ENCODE measurements at regions of chrX and their contacts with region 1.

Region 1: GRCh38 chrX:23008431-23009099 is 8.8 kb downstream of the DDX53 start:
- DNase-seq: peak; percentile 62
- ATAC-seq: peak; percentile 88
- H3K4me3 ChIP-seq: no peak overlapping the region; the same call in 1 of the 2 replicates
- H3K27ac ChIP-seq: no peak overlapping the region
- H3K4me1 ChIP-seq: no peaks in the 10 kb centered on the region
- H3K27me3 ChIP-seq: no peaks in the 10 kb centered on the region
- CTCF ChIP-seq: peak; percentile 73

Region 2: DNA sequence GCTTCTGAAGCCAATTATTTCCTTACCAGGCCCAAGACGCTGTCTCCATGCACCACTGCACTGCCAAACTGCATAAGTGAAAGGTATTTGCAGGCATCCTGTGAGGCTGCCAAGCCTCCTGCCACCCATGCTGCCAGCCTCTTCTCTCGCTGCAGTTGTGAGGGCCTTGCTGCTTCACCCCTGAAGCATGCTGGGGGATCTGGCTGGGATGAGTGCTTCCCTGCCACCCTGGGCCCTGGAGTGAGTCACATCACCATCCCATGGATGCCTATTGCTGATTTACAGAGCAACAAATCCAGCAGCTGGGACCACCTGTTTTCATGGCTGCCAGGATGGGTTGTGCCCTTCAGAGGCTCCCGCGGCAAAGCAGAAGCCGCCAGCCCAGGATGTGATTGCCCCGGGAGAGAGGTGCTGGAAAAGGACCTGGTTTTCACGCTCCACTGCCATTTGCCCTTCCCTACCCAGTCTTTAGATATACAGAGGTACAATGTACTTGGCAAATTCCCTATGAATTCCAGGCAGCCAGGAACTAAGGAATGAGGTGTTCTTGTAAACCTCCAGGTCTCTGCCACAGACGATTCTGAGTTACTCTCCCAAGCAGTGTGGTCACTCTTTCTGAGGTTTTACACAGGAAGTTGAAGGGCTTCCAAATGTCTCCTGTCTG is 284.6 kb after region 1 on chrX:
- CTCF ChIA-PET with region 1: no interaction called
- POLR2A ChIA-PET with region 1: no interaction called
- intact Hi-C with region 1: loop called (anchors 1 kb)
- DNase-seq: peak; percentile 49
- ATAC-seq: peak; percentile 92
- H3K4me3 ChIP-seq: no peak overlapping the region
- H3K27ac ChIP-seq: no peak overlapping the region
- H3K4me1 ChIP-seq: peaks cover 5% of the 10 kb centered on the region; the same call in 1 of the 2 replicates
- H3K27me3 ChIP-seq: no peaks in the 10 kb centered on the region
- CTCF ChIP-seq: no peak

Region 3: DNA sequence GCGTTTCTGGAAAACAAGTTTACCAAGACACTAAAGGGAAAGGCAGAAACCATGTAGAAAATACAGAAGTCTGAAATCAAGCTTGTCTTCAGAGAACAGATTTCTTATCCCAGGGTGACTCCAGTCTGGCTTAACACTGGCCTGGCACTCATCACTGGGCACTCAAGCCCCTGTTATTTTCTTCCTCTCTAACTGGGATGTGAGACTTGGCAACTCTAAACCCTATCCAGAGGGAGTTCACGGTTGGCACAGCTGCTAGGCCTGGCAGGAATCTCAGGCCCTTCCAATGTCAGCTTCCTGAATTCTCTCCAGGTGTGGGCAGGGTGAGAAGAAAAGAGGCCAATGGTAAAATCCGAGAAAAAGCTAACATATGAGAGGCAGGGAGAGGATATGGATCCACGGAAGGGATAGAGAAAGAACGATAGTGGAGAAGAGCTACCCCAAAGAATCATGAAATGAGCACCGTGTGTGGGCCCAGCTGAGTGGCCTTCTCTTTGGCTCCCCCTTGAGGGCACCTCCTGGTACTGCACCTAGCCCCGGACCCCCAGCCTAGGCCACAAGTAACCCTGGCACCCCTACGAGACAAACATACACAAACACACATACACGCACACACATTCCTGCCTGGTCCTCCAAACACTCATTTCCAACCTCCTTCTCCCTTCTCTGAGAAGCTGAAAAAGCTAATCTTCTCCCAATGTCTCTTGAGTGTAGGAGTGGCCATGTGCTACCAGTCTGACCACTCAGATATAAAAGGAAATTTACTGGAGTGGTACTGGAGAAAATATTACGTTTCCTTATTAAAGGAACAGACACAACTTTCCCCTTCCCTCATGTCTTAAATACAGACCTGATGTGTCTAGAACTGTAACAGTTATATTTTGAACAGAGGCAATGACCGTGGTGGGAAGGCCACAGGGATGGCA is 309.5 kb after region 1 on chrX:
- CTCF ChIA-PET with region 1: interaction called, 3 read pairs
- POLR2A ChIA-PET with region 1: no interaction called
- intact Hi-C with region 1: loop called (anchors 1 kb)
- DNase-seq: peak; percentile 38
- ATAC-seq: peak; percentile 64
- H3K4me3 ChIP-seq: no peak overlapping the region
- H3K27ac ChIP-seq: no peak overlapping the region
- H3K4me1 ChIP-seq: no peaks in the 10 kb centered on the region
- H3K27me3 ChIP-seq: no peaks in the 10 kb centered on the region
- CTCF ChIP-seq: peak; percentile 77

Measured in PC-3 (cell line).